OCI-LY7 (cell line): ENCODE measurements at regions of chr10 and their contacts with region 1.

Region 1: GRCh38 chr10:102503281-102504220 is at the start of gene SUFU:
- DNase-seq: peak; percentile 100
- H3K4me3 ChIP-seq: peak within 1 kb of the TSS; percentile 98
- H3K27ac ChIP-seq: peak within 1 kb of the TSS; percentile 64
- H3K4me1 ChIP-seq: peaks cover 20% of the 10 kb centered on the region
- CTCF ChIP-seq: peak; percentile 92
- total RNA-seq, gene SUFU: 1.9 and 4.9 TPM in 2 replicates

Region 2: GRCh38 chr10:102450194-102450938 is 53.2 kb before region 1 on chr10:
- CTCF ChIA-PET with region 1: no interaction called
- POLR2A ChIA-PET with region 1: interaction called, 3 read pairs
- intact Hi-C with region 1: loop called (anchors 2 kb)
- DNase-seq: peak; percentile 94
- H3K4me3 ChIP-seq: peak overlapping the region; percentile 96
- H3K27ac ChIP-seq: peak overlapping the region; percentile 83
- H3K4me1 ChIP-seq: peaks cover 33% of the 10 kb centered on the region
- CTCF ChIP-seq: no peak

Region 3: GRCh38 chr10:102540023-102540422 is 36.5 kb after region 1 on chr10:
- CTCF ChIA-PET with region 1: no interaction called
- POLR2A ChIA-PET with region 1: no interaction called
- intact Hi-C with region 1: no loop called
- DNase-seq: peak; percentile 26
- H3K4me3 ChIP-seq: no peak overlapping the region
- H3K27ac ChIP-seq: no peak overlapping the region
- H3K4me1 ChIP-seq: peaks cover 11% of the 10 kb centered on the region
- CTCF ChIP-seq: peak; percentile 74

Region 4: DNA sequence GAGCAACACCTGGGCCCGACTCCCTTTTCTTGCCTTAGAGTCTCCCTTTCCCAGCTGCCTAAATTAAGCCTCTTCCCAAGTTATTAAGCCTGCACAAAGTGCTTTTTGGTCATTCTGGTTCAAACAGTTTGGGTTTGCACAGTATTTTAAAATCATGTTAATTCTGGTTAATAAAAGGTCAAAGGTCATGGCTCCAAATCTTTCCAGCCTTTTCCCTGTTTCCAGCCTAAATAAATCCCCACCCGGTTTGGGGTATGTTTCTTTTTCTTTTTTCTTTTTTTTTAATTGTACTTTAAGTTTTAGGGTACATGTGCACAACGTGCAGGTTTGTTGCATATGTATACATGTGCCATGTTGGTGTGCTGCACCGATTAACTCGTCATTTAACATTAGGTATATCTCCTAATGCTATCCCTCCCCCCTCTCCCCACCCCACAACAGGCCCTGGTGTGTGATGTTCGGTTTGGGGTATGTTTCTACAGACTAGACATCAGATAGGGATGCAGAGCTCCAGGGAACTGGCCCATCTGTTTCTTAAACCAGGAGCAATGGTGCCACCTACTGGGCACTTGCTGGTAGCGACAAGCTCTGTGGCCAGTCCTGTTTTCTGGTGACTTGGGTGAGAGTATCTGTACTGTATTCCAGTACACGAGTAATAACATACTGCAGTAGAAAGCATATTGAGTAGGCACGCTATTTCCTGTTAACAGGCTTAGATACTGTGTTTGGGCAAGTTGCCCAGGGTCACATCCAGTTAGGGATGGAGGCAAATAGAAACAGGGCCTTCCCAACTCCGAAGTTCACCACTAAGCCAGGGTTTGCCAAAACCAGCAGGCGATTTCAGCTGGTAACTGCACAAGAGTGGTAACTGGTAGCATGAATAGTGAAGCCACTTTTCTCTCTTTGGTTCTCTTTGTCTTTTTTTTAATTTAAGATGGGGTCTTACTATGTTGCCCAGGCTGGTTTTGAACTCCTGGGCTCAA is 80.2 kb after region 1 on chr10:
- CTCF ChIA-PET with region 1: interaction called, 3 read pairs
- POLR2A ChIA-PET with region 1: interaction called, 6 read pairs
- intact Hi-C with region 1: loop called (anchors 1 kb)
- DNase-seq: peak; percentile 90
- H3K4me3 ChIP-seq: no peak overlapping the region
- H3K27ac ChIP-seq: no peak overlapping the region
- H3K4me1 ChIP-seq: no peaks in the 10 kb centered on the region
- CTCF ChIP-seq: peak; percentile 87

Region 5: DNA sequence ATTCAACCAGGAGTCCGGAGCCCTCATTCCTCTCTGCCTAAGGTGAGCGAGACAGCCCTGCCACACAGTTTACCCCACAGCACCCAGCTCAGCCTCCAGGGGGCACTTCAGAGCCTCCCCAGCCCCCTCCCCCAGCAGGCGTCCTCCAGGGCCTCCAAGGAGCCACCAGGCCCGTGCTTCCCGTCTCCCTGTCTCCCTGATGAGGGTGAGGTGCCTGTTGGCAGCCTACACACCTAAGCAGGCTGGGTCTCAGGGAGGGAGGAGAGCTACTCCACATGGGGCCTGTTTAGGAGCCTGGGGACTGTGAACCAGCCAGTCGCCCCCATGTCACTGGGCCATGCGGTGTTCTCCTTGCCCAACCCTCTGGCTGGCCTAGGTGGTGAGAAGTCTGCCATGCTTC is 111.8 kb after region 1 on chr10:
- CTCF ChIA-PET with region 1: interaction called, 11 read pairs
- POLR2A ChIA-PET with region 1: interaction called, 3 read pairs
- intact Hi-C with region 1: no loop called
- DNase-seq: peak; percentile 44
- H3K4me3 ChIP-seq: no peak overlapping the region
- H3K27ac ChIP-seq: no peak overlapping the region
- H3K4me1 ChIP-seq: no peaks in the 10 kb centered on the region
- CTCF ChIP-seq: peak; percentile 75

Region 6: DNA sequence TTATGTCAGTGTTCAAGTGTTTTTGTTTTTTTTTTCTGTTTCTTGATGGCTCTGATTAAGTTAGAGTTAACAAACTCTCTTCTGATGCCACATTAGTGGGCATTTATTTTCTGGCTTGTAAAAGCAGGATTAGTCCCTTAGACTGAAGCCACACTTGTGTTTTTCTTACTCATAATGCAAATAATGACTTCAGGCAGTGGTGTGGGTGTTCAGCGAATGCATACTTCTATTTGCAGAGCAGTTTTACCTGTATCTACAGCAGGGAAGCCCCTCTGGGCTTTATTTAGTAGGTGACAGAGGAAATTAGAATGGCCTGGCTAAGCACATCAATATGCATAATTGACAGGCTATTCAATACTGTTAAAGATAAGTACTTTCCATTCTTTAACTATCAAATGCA is 494.5 kb after region 1 on chr10:
- CTCF ChIA-PET with region 1: no interaction called
- POLR2A ChIA-PET with region 1: no interaction called
- intact Hi-C with region 1: no loop called
- DNase-seq: no peak
- H3K4me3 ChIP-seq: no peak overlapping the region
- H3K27ac ChIP-seq: no peak overlapping the region
- H3K4me1 ChIP-seq: peaks cover under 1% of the 10 kb centered on the region
- CTCF ChIP-seq: no peak